HepG2 (cell line): ENCODE measurements at regions of chr17 and their contacts with region 1.

Region 1: GRCh38 chr17:80147035-80147836 is at the start of gene EIF4A3:
- DNase-seq: peak; percentile 99
- ATAC-seq: peak; percentile 90
- H3K4me3 ChIP-seq: peak within 1 kb of the TSS; percentile 84 to 95 (median 88)
- H3K27ac ChIP-seq: peak within 1 kb of the TSS; percentile 94
- H3K4me1 ChIP-seq: peaks cover 45% of the 10 kb centered on the region
- H3K27me3 ChIP-seq: peaks cover 0 to 11% of the 10 kb centered on the region in 2 experiments; a peak in 1 of 5 replicates
- CTCF ChIP-seq: peak; percentile 54
- EP300 ChIP-seq: peak in 1 of 2 experiments; percentile 16; a peak in 1 of 4 replicates
- POLR2A ChIP-seq: peak; percentile 65 to 96
- RAD21 ChIP-seq: peak; percentile 43; the same call in 1 of the 2 replicates
- total RNA-seq, gene EIF4A3: 187 and 239 TPM in 2 replicates

Region 2: DNA sequence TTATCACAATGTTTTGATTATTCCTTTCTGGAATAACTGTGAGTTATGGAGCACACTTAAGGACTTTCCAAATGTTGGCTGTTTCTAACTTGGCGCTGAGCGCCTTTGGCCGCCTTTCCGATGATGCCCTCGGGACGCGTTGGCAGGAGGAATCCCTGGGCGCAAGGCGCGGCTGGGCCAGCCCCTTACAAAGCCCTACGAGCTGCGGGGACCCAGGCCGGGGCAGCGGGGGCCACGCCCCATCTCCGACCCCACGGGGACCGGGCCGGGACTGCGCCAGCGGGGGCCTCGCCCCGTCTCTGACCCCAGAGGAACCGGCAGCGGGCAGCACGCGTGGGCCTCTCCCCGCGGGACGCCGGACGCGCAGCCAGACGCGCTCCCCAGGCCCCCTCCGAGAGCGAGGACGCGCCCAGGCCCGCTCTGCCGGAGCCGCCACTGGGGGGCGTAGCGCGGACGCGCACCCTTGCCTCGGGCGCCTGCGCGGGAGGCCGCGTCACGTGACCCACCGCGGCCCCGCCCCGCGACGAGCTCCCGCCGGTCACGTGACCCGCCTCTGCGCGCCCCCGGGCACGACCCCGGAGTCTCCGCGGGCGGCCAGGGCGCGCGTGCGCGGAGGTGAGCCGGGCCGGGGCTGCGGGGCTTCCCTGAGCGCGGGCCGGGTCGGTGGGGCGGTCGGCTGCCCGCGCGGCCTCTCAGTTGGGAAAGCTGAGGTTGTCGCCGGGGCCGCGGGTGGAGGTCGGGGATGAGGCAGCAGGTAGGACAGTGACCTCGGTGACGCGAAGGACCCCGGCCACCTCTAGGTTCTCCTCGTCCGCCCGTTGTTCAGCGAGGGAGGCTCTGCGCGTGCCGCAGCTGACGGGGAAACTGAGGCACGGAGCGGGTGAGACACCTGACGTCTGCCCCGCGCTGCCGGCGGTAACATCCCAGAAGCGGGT is 46.0 kb before region 1 on chr17 and contains the start of gene GAA:
- CTCF ChIA-PET with region 1: no interaction called
- POLR2A ChIA-PET with region 1: interaction called, 13 read pairs
- in situ Hi-C with region 1: no loop called
- intact Hi-C with region 1: no loop called
- DNase-seq: peak; percentile 62
- ATAC-seq: peak; percentile 75
- H3K4me3 ChIP-seq: peak within 1 kb of the TSS; percentile 84 to 100 (median 91)
- H3K27ac ChIP-seq: peak within 1 kb of the TSS; percentile 68
- H3K4me1 ChIP-seq: peaks cover 49% of the 10 kb centered on the region
- H3K27me3 ChIP-seq: peaks cover 2 to 31% of the 10 kb centered on the region in 2 experiments; a peak in 3 of 5 replicates
- CTCF ChIP-seq: peak; percentile 86
- EP300 ChIP-seq: peak; percentile 12 to 73; a peak in 2 of 4 replicates
- POLR2A ChIP-seq: peak in 1 of 2 experiments; percentile 82; a peak in 3 of 4 replicates
- RAD21 ChIP-seq: peak; percentile 96
- total RNA-seq, gene GAA: 13.4 and 36.4 TPM in 2 replicates

Region 3: DNA sequence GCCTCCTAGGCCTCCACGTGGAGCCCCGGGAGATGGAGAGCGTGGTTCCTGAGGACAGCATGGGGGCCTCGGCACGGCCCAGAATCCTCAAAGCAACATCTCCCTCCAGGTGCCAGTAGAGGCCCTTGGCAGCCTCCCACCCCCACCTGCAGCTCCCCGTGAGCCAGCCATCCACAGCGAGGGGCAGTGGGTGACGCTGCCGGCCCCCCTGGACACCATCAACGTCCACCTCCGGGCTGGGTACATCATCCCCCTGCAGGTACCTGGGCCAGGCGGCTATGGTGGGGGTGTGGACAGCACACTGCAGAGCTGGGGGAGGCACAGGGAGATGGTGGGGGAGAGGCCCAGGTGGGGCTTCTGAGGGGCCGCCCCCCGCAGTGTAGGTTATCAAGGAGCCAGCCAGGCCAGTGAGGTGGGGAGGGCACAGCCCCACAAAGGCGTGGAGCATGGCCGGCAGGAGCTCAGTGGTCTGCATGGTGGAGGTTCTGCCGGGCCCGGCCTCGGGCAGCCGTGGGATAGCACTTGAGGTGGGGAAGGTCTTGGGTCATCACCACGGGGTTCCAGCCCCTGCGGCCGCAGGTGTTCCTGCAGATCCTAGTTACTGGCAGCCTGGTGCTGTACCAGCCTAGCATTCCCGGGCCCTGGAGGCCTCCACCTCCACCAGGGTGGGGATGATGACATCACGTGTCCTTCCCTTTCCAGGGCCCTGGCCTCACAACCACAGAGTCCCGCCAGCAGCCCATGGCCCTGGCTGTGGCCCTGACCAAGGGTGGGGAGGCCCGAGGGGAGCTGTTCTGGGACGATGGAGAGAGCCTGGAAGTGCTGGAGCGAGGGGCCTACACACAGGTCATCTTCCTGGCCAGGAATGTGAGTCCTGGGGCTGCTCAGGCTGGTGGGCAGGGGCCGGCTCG is 29.5 kb before region 1 on chr17:
- CTCF ChIA-PET with region 1: no interaction called
- POLR2A ChIA-PET with region 1: no interaction called
- in situ Hi-C with region 1: no loop called
- intact Hi-C with region 1: no loop called
- DNase-seq: no peak
- ATAC-seq: peak; percentile 12
- H3K4me3 ChIP-seq: no peak overlapping the region
- H3K27ac ChIP-seq: no peak overlapping the region
- H3K4me1 ChIP-seq: no peaks in the 10 kb centered on the region
- H3K27me3 ChIP-seq: no peaks in the 10 kb centered on the region
- CTCF ChIP-seq: no peak
- EP300 ChIP-seq: no peak
- POLR2A ChIP-seq: no peak
- RAD21 ChIP-seq: no peak

Region 4: GRCh38 chr17:80132906-80133625 is 14.2 kb before region 1 on chr17:
- CTCF ChIA-PET with region 1: no interaction called
- POLR2A ChIA-PET with region 1: interaction called, 10 read pairs
- in situ Hi-C with region 1: no loop called
- intact Hi-C with region 1: no loop called
- DNase-seq: no peak
- ATAC-seq: peak; percentile 37
- H3K4me3 ChIP-seq: no peak overlapping the region
- H3K27ac ChIP-seq: no peak overlapping the region
- H3K4me1 ChIP-seq: peaks cover 20% of the 10 kb centered on the region
- H3K27me3 ChIP-seq: no peaks in the 10 kb centered on the region
- CTCF ChIP-seq: no peak
- EP300 ChIP-seq: no peak
- POLR2A ChIP-seq: no peak
- RAD21 ChIP-seq: no peak

Region 5: GRCh38 chr17:80195731-80196529 is 48.7 kb after region 1 on chr17:
- CTCF ChIA-PET with region 1: no interaction called
- POLR2A ChIA-PET with region 1: interaction called, 8 read pairs
- in situ Hi-C with region 1: no loop called
- intact Hi-C with region 1: loop called (anchors 5 kb)
- DNase-seq: peak; percentile 48
- ATAC-seq: peak; percentile 49
- H3K4me3 ChIP-seq: no peak overlapping the region
- H3K27ac ChIP-seq: no peak overlapping the region
- H3K4me1 ChIP-seq: peaks cover 44% of the 10 kb centered on the region
- H3K27me3 ChIP-seq: peaks cover 19 to 63% of the 10 kb centered on the region in 2 experiments
- CTCF ChIP-seq: peak; percentile 92
- EP300 ChIP-seq: no peak
- POLR2A ChIP-seq: no peak
- RAD21 ChIP-seq: peak; percentile 90

Region 6: DNA sequence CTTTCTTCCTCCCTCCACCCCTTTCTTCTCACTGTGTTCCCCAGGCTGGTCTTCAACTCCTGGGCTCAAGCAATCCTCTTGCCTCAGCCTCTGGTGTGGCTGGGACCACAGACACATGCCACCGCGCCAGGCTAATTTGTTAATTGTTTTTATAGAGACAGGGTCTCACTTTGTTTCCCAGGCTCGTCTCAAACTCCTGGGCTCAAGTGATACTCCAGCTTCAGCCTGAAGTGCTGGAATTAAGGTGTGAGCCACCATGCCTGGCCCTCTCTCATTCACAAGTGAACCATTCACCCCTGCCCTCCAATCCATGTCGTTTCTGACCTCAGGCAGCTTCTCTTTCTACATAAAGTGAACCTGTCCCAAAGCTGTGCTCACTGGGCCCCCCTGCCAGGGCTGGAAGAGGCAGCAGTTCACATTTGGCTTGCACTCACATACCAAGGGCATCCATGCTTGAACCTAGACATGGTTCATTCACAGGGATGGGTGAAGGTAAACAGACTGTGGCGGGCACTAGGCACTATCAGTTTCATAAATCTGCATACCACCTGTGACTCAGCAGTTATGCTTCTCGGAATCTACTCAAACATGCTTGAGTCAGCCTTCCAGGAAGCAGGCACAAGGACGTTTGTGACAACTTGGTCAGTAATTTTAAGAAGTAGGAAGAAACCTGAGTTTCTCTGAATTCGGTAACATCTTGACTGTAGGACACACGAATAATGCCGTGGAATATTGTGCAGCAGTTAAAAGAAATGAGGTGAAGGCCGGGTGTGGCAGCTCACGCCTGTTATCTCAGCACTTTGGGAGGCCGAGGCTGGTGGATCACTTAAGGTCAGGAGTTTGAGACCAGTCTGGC is 107.4 kb after region 1 on chr17:
- CTCF ChIA-PET with region 1: no interaction called
- POLR2A ChIA-PET with region 1: interaction called, 3 read pairs
- in situ Hi-C with region 1: loop called (anchors 5 kb)
- intact Hi-C with region 1: no loop called
- DNase-seq: peak; percentile 88
- ATAC-seq: peak; percentile 58
- H3K4me3 ChIP-seq: no peak overlapping the region
- H3K27ac ChIP-seq: peak overlapping the region; percentile 17
- H3K4me1 ChIP-seq: peaks cover 28% of the 10 kb centered on the region
- H3K27me3 ChIP-seq: no peaks in the 10 kb centered on the region
- CTCF ChIP-seq: no peak
- EP300 ChIP-seq: peak in 1 of 2 experiments; percentile 79; a peak in 2 of 4 replicates
- POLR2A ChIP-seq: no peak
- RAD21 ChIP-seq: no peak

Region 7: DNA sequence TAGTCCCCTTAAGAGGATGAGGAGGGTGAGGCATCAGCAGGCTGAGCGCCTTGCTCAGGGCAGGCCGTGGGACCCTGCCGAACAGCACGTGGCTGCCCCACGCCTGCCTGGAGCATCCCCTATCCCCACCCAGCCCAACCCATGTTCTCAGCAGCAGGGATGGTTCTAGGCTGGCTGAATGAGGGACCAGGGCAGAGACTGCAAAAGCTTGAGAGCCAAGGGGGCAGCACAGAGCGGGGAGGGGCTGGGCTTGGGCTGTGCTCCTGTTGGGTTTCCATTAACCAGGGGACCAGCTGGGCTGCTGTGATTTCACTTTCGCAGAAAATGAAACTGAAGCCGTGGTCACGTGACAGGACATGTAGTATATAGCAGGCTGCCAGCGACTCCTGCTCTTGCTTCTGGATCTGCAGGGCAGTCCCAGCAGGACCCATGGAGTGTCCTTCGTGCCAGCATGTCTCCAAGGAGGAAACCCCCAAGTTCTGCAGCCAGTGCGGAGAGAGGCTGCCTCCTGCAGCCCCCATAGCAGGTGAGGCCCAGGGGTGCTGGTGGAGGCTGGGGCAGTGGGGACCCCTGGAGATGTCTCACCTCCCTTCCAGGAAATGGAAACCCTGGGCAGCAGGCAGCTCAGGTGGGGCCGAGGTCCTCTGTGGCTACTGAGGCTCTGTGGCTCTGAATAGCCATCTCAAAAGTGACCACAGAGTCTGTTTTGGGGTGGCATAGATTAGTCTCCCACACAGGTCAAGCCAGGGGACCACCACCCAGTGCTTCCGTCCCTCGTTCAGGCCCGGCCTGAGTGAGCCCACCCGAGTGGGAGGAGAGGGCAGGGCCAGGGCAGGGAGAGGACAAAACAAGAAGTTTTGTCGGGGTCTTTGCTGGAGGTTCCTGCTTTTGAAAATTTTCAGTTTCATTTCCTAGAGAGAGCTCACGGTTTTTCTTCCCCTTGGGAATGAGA is 116.3 kb after region 1 on chr17:
- CTCF ChIA-PET with region 1: no interaction called
- POLR2A ChIA-PET with region 1: interaction called, 6 read pairs
- in situ Hi-C with region 1: loop called (anchors 5 kb)
- intact Hi-C with region 1: loop called (anchors 2 kb)
- DNase-seq: peak; percentile 98
- ATAC-seq: peak; percentile 82
- H3K4me3 ChIP-seq: peak overlapping the region; percentile 68 to 89 (median 75)
- H3K27ac ChIP-seq: peak overlapping the region; percentile 54
- H3K4me1 ChIP-seq: peaks cover 50% of the 10 kb centered on the region
- H3K27me3 ChIP-seq: no peaks in the 10 kb centered on the region; a peak in 1 of 5 replicates
- CTCF ChIP-seq: peak; percentile 71
- EP300 ChIP-seq: 0 out of 4 replicates have a peak, but pooled peaks of 1 of the 2 experiments have one; percentile 9
- POLR2A ChIP-seq: peak; percentile 99 to 100
- RAD21 ChIP-seq: peak; percentile 78

Region 8: GRCh38 chr17:80274331-80274730 is 127.1 kb after region 1 on chr17:
- CTCF ChIA-PET with region 1: no interaction called
- POLR2A ChIA-PET with region 1: no interaction called
- in situ Hi-C with region 1: no loop called
- intact Hi-C with region 1: no loop called
- DNase-seq: no peak
- ATAC-seq: peak; percentile 15
- H3K4me3 ChIP-seq: no peak overlapping the region
- H3K27ac ChIP-seq: peak overlapping the region; percentile 41
- H3K4me1 ChIP-seq: no peaks in the 10 kb centered on the region
- H3K27me3 ChIP-seq: no peaks in the 10 kb centered on the region
- CTCF ChIP-seq: no peak
- EP300 ChIP-seq: no peak
- POLR2A ChIP-seq: no peak
- RAD21 ChIP-seq: no peak